ENCODE measurements at regions of chr15 and their contacts with region 1.

Region 1: GRCh38 chr15:68204776-68205557 is at the start of gene CALML4:
- DNase-seq: no peak
- ATAC-seq: no peak
- H3K4me3 ChIP-seq: peak within 1 kb of the TSS in 1 of 2 donors; percentile 6
- H3K4me3 Mint-ChIP-seq: peak within 1 kb of the TSS in 1 of 3 donors; percentile 49
- H3K27ac ChIP-seq: no peak within 1 kb of the TSS
- H3K27ac Mint-ChIP-seq: peak within 1 kb of the TSS in 1 of 2 donors; percentile 22
- H3K4me1 ChIP-seq: peaks cover 35 to 46% of the 10 kb centered on the region in 2 experiments
- H3K4me1 Mint-ChIP-seq: peaks cover 24 to 39% (median 26%) of the 10 kb centered on the region in 3 donors
- H3K27me3 ChIP-seq: no peaks in the 10 kb centered on the region
- H3K27me3 Mint-ChIP-seq: no peaks in the 10 kb centered on the region
- total RNA-seq, gene CALML4: 2.4 to 5.4 (median 3.3) TPM

Region 2: DNA sequence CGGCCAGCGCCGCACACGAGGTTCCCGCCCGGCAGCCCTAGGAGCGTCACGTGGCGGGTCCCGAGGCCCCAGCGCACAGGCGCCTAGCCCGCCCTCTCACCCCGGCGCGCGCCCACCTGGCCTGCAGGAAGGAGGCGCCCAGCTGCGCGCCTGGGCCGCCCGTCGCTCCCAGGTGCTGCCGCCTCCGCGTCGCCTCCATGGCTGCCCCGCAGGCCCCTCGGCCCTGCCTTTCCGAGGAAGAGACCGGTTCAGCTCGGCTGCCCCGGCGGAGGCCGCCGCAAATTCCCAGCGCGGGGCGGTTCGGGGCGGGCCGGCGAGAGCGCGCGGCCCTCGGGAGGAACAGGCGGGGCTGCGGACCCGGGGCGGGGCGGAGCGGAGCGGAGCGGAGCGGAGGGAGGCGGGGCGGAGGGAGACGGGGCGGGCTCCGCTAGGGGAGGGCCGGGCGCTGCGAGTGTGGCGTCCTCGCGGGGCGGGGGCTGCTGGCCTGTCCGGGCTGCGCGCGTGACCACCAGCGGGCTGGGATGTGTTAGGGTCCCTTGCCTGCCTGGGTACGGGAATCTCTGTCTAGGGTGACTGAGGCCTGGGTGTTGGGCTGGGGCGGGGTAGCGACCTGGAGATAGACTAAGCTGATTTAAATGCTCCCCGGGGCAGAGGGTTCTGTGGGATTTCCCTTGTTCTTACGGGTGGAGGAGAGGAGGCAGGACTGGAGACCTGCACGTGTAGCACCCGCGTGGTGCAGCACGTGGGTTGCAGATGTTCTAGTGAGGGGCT is 24.6 kb after region 1 on chr15 and contains the start of gene CLN6:
- CTCF ChIA-PET with region 1: no interaction called
- POLR2A ChIA-PET with region 1: interaction called in 1 of 2 experiments, 10 read pairs
- DNase-seq: peak; percentile 62 to 86 (median 74)
- ATAC-seq: peak; percentile 85 to 95 (median 90)
- H3K4me3 ChIP-seq: peak within 1 kb of the TSS; percentile 73 to 79
- H3K4me3 Mint-ChIP-seq: peak within 1 kb of the TSS; percentile 77 to 94 (median 90)
- H3K27ac ChIP-seq: peak within 1 kb of the TSS; percentile 53
- H3K27ac Mint-ChIP-seq: peak within 1 kb of the TSS; percentile 86 to 90
- H3K4me1 ChIP-seq: peaks cover 7 to 31% of the 10 kb centered on the region in 2 experiments
- H3K4me1 Mint-ChIP-seq: peaks cover 28 to 39% (median 35%) of the 10 kb centered on the region in 3 donors
- H3K27me3 ChIP-seq: peaks cover 0 to 25% of the 10 kb centered on the region in 2 experiments
- H3K27me3 Mint-ChIP-seq: peaks cover 4 to 6% of the 10 kb centered on the region in 2 donors
- total RNA-seq, gene CLN6: 15.4 to 24.0 (median 17.9) TPM

Region 3: DNA sequence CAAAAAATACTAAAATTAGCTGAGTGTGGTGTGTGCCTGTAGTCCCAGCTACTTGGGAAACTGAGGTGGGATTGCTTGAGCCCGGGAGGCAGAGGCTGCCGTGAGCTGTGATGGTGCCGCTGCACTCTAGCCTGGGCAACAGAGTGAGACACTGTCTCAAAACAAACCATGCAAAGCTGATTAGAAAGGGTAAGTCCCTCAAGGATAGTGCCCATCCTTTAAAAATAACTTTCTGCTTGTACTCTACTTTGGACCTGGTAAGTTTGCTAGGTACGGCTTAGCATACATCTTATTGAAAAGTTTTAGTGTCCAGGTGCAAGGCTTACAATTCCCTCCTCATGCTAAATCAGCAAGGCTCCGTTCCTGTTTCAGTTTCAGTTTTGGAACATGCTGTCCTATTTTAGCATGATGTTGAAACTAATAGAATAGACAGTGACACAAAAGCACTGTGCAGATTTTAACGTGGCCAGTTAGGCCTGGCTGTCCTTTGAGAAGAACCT is 94.0 kb after region 1 on chr15:
- CTCF ChIA-PET with region 1: no interaction called
- POLR2A ChIA-PET with region 1: no interaction called
- DNase-seq: peak in 7 of 35 experiments; percentile 8 to 66 (median 19)
- ATAC-seq: peak; percentile 70 to 83 (median 76)
- H3K4me3 ChIP-seq: peak overlapping the region; percentile 32 to 60
- H3K4me3 Mint-ChIP-seq: peak overlapping the region; percentile 65 to 76 (median 70)
- H3K27ac ChIP-seq: peak overlapping the region; percentile 59
- H3K27ac Mint-ChIP-seq: peak overlapping the region; percentile 84 to 90
- H3K4me1 ChIP-seq: peaks cover 8 to 15% of the 10 kb centered on the region in 2 experiments
- H3K4me1 Mint-ChIP-seq: peaks cover 42 to 48% (median 42%) of the 10 kb centered on the region in 3 donors
- H3K27me3 ChIP-seq: no peaks in the 10 kb centered on the region
- H3K27me3 Mint-ChIP-seq: no peaks in the 10 kb centered on the region